ENCODE measurements at regions of chr11 and their contacts with region 1.

Region 1: GRCh38 chr11:32435511-32435941 is at the start of gene WT1:
- DNase-seq: peak; percentile 64
- ATAC-seq: peak; percentile 65 to 78 (median 71)
- H3K4me3 ChIP-seq: peak within 1 kb of the TSS; percentile 46 to 71 (median 58)
- H3K27ac ChIP-seq: peak within 1 kb of the TSS; percentile 85 to 95 (median 93)
- H3K4me1 ChIP-seq: peaks cover 0 to 65% (median 33%) of the 10 kb centered on the region in 9 donors
- H3K27me3 ChIP-seq: peaks cover 9 to 100% (median 95%) of the 10 kb centered on the region in 7 donors
- CTCF ChIP-seq: no peak
- total RNA-seq, gene WT1: 1.9 to 4.6 (median 2.9) TPM

Region 2: DNA sequence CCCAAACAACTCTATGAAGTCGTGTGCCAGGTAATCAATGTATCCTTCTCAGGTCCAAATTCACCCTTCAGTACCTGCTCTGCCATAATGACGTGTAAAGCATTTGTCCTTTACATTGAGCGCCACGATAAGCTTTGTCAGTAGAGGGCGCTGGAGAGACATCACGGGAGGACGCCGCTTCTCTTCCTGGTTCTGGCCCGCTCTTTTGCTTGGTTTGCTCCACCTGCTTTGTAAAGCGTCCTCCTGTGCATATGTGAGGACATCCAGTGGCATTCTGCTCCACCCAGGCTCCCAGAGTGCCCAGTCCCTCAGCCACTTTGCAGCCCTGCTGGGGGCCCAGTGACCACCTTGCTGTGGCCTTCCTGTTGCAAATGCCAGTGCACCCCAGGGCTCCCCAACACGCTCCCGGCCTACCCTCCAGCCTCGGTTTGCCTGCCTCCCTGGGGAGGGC is 61.2 kb before region 1 on chr11:
- intact Hi-C with region 1: no loop called
- DNase-seq: peak in 1 of 2 donors; percentile 31
- ATAC-seq: peak in 2 of 8 donors; percentile 41 to 61
- H3K4me3 ChIP-seq: no peak overlapping the region
- H3K27ac ChIP-seq: no peak overlapping the region
- H3K4me1 ChIP-seq: no peaks in the 10 kb centered on the region
- H3K27me3 ChIP-seq: peaks cover 0 to 7% (median 0%) of the 10 kb centered on the region in 7 donors
- CTCF ChIP-seq: peak; percentile 32 to 68 (median 56)

Region 3: DNA sequence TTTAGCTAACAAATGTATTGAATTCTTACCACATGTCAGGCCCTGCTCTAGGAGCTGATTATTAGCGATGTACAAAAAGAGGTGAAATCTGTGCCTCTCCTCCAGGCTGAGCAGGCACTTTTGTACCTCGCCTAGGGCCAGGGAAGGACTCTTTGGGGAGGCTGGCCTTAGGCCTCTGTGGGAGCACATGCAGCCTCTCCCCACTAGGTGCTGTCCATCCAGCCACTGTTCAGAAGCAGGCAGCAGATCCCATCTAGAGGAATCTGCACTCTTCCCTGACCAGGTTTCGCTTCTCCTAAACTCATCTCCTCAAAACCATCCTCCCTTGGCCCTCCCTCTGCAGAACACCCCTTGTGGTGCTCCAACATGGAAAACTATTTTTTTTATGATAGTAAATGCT is 51.7 kb after region 1 on chr11:
- intact Hi-C with region 1: no loop called
- DNase-seq: no peak
- ATAC-seq: peak in 1 of 8 donors; percentile 33
- H3K4me3 ChIP-seq: no peak overlapping the region
- H3K27ac ChIP-seq: no peak overlapping the region
- H3K4me1 ChIP-seq: no peaks in the 10 kb centered on the region
- H3K27me3 ChIP-seq: no peaks in the 10 kb centered on the region
- CTCF ChIP-seq: peak in 3 of 9 donors; percentile 11 to 22 (median 14)

Region 4: GRCh38 chr11:32571039-32571438 is 135.5 kb after region 1 on chr11:
- intact Hi-C with region 1: loop called in 1 of 10 experiments (anchors 10 kb)
- DNase-seq: no peak
- ATAC-seq: no peak
- H3K4me3 ChIP-seq: no peak overlapping the region
- H3K27ac ChIP-seq: no peak overlapping the region
- H3K4me1 ChIP-seq: peaks cover 0 to 5% (median 0%) of the 10 kb centered on the region in 9 donors
- H3K27me3 ChIP-seq: peaks cover 0 to 5% (median 3%) of the 10 kb centered on the region in 7 donors
- CTCF ChIP-seq: no peak

Region 5: DNA sequence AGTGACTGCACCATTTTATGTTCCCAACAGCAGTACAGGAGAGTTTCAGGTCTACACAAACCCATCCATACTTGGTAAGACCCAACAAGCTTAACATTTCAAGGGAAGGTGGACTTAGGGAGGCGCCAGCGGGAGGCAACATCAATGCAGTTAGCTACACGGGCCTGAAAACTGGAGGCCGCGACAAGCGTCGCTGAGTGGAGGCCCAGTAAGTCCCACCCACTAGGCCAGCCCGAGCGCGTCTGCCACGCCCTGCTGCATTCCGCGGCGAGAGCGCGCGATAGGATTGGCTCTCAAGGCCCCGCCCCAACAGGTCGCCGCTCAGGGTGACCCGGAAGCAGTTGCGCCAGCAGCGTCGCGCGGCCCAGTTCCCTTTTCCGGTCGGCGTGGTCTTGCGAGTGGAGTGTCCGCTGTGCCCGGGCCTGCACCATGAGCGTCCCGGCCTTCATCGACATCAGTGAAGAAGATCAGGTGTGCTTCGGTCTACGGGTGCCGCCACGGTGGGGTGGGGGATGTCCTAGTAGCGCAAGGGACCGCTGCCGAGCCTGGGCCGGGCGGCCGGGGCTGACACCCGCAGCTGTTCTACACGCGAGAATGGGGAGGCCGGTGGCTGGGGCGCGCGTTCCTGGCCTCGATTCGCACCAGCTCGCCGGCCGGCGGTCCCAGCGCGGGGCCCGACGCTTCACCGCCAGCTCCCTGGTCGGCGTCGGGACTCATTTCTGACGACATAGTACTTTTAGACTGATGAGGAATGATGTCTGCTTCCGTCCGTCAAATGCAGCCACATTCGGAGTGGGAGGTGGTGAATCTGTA is 148.1 kb after region 1 on chr11 and contains the start of gene EIF3M:
- intact Hi-C with region 1: loop called in 3 of 10 experiments (anchors 5 to 10 kb)
- DNase-seq: peak; percentile 96 to 97
- ATAC-seq: peak; percentile 100
- H3K4me3 ChIP-seq: peak within 1 kb of the TSS; percentile 56 to 98 (median 88)
- H3K27ac ChIP-seq: peak within 1 kb of the TSS; percentile 38 to 94 (median 85)
- H3K4me1 ChIP-seq: peaks cover 0 to 47% (median 26%) of the 10 kb centered on the region in 9 donors
- H3K27me3 ChIP-seq: peaks cover 0 to 10% (median 0%) of the 10 kb centered on the region in 7 donors
- CTCF ChIP-seq: no peak
- total RNA-seq, gene EIF3M: 128 to 250 (median 162) TPM

Measured in heart right ventricle (tissue), 16 donors.